Colonic mucosa (tissue), 4 donors: ENCODE measurements at regions of chr9 and their contacts with region 1.

Region 1: GRCh38 chr9:130343445-130343918 is 77.9 kb downstream of the HMCN2 start:
- DNase-seq: no peak
- H3K4me3 ChIP-seq: no peak overlapping the region
- H3K27ac ChIP-seq: no peak overlapping the region
- H3K4me1 ChIP-seq: no peaks in the 10 kb centered on the region
- H3K27me3 ChIP-seq: no peaks in the 10 kb centered on the region
- CTCF ChIP-seq: peak; percentile 78

Region 2: GRCh38 chr9:130107234-130107861 is 236.1 kb before region 1 on chr9:
- intact Hi-C with region 1: loop called (anchors 10 kb)
- DNase-seq: peak; percentile 87
- H3K4me3 ChIP-seq: no peak overlapping the region
- H3K27ac ChIP-seq: no peak overlapping the region
- H3K4me1 ChIP-seq: no peaks in the 10 kb centered on the region
- H3K27me3 ChIP-seq: no peaks in the 10 kb centered on the region
- CTCF ChIP-seq: peak; percentile 79

Region 3: GRCh38 chr9:130243015-130243734 is 100.3 kb before region 1 on chr9:
- intact Hi-C with region 1: loop called (anchors 10 kb)
- DNase-seq: peak; percentile 83
- H3K4me3 ChIP-seq: no peak overlapping the region
- H3K27ac ChIP-seq: no peak overlapping the region
- H3K4me1 ChIP-seq: no peaks in the 10 kb centered on the region
- H3K27me3 ChIP-seq: no peaks in the 10 kb centered on the region
- CTCF ChIP-seq: peak; percentile 98

Region 4: DNA sequence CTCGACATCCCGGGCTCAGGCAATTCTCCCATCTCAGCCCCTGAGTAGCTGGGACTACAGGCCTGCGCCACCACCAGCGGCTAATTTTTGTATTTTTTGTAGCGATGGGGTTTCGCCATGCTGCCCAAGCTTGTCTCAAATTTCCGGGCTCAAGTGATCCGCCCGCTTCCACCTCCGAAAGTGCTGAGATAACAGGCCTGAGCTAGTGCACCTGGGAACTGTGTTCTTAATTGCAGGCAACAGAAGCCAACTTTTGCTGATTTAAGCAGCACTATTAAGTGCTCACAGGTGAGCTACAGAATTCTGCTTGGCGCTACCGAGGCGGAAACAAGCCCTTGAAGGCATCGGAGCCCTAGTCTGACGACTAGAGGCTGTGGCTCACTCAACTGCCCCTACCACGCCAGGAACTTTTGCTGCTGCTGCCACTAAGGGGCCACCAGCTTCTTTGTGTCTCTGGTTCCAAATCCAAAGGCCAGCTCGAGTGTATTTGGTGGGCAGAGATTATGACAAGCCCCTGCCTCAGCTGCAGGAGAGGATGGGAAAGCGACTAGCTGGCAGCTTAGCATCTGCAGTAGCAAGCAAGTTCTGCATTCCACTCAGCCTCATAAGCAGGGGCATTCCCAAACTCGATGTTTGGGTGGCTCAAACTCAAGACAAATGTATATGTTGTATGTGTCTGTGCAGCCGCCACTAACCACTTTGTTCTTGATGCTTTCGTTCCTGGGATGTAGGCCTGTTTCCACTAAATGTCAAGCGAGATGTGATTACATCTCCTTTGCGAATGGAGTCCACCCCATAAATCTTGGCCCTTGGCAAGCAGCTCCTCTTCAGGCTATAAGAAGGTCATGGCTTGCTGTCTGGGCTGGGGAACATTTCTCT is 88.5 kb before region 1 on chr9:
- intact Hi-C with region 1: no loop called
- DNase-seq: no peak
- H3K4me3 ChIP-seq: no peak overlapping the region
- H3K27ac ChIP-seq: no peak overlapping the region
- H3K4me1 ChIP-seq: no peaks in the 10 kb centered on the region
- H3K27me3 ChIP-seq: no peaks in the 10 kb centered on the region
- CTCF ChIP-seq: no peak

Region 5: DNA sequence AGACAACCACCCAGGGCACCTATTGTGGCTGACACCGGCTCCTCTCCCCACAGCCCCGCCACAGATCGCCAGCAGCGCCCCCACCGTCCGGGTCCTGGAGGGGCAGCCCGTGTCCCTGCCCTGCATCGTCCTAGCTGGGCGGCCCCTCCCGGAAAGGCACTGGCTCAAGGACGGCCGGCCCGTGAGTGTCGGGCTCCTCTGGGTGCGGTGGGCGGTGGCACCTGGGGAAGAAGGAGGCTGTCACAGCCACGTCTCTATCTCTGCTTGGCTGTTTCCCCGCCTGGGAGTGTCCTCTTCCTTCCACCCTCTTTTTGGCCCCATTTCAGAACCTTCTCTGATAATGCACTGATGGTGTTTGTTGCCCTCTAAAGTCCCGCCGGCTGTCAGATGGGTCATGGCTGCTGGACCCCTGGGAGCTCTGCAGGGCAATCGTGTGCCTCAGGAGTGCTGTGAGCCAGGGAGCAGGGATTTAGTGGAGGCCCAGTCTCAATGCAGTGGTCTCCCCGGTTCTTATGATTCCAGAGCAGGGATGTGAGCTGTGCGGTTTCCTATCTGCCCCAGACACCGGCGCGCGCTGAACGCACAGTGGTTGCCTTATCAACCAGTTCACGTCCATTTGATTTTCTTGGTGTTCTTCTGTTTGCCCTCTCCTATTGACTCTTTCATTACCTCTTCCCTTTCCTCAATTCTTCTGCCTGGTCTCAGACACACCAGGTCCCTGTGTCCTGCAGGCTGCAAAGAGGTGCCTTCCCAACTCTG is 22.6 kb before region 1 on chr9:
- intact Hi-C with region 1: no loop called
- DNase-seq: peak; percentile 43
- H3K4me3 ChIP-seq: no peak overlapping the region
- H3K27ac ChIP-seq: no peak overlapping the region
- H3K4me1 ChIP-seq: no peaks in the 10 kb centered on the region
- H3K27me3 ChIP-seq: no peaks in the 10 kb centered on the region
- CTCF ChIP-seq: no peak